ENCODE measurements at regions of chr5 and their contacts with region 1.

Region 1: GRCh38 chr5:83473346-83474163 is 2.0 kb downstream of the VCAN start:
- DNase-seq: peak; percentile 89 to 92
- ATAC-seq: peak; percentile 66 to 80 (median 78)
- H3K4me3 ChIP-seq: peak overlapping the region; percentile 62
- H3K27ac ChIP-seq: peak overlapping the region; percentile 48
- H3K4me1 ChIP-seq: peaks cover 4% of the 10 kb centered on the region
- H3K27me3 ChIP-seq: peaks cover 0 to 84% (median 11%) of the 10 kb centered on the region in 3 donors
- CTCF ChIP-seq: peak; percentile 58

Region 2: DNA sequence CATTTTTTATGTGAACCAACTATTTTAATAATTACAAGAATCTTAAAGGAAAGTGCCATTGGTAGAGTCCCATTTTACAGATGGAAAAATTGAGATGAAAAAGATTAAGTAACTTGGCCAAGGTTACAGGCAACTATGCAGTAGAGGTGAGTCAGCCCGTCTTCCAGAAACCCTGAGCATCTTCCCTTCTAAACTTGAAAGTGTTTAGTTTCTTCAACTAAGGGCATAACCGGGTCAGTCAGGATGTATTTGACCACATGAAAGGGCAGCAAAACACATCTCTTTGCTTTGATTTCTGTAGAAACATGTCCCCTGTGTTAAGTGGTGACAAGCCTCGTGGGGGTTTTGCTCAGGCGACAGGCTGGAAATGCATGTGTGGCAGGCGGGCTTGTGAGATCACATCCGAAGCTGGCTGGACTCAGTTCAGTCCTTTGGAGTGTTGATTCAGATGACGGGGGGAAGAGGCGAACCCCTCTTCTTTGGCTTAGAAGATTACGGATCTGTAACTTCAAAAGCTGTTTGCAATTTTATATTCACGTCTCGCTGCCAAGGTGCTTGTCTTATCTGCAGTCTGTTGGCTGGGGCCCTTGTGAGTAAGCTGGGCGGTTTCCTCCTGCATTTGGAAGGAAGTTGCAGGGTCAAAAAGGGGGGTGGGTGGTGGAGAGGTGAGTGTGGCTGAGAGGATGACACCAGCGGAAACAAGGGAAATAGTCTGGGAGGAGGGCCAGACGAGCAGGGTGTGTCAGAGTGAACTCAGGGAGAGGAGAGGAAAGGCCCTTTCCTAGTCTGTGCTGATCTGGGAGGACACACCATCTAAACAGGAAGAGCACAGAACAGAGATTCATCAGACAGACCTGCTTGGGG is 1116.5 kb before region 1 on chr5:
- intact Hi-C with region 1: loop called in 1 of 2 experiments (anchors 5 kb)
- DNase-seq: peak; percentile 76 to 85
- ATAC-seq: peak; percentile 38 to 89 (median 74)
- H3K4me3 ChIP-seq: no peak overlapping the region
- H3K27ac ChIP-seq: peak overlapping the region; percentile 28
- H3K4me1 ChIP-seq: no peaks in the 10 kb centered on the region
- H3K27me3 ChIP-seq: no peaks in the 10 kb centered on the region
- CTCF ChIP-seq: no peak

Measured in psoas muscle (tissue), 8 donors.